ENCODE measurements at regions of chr19 and their contacts with region 1.

Region 1: DNA sequence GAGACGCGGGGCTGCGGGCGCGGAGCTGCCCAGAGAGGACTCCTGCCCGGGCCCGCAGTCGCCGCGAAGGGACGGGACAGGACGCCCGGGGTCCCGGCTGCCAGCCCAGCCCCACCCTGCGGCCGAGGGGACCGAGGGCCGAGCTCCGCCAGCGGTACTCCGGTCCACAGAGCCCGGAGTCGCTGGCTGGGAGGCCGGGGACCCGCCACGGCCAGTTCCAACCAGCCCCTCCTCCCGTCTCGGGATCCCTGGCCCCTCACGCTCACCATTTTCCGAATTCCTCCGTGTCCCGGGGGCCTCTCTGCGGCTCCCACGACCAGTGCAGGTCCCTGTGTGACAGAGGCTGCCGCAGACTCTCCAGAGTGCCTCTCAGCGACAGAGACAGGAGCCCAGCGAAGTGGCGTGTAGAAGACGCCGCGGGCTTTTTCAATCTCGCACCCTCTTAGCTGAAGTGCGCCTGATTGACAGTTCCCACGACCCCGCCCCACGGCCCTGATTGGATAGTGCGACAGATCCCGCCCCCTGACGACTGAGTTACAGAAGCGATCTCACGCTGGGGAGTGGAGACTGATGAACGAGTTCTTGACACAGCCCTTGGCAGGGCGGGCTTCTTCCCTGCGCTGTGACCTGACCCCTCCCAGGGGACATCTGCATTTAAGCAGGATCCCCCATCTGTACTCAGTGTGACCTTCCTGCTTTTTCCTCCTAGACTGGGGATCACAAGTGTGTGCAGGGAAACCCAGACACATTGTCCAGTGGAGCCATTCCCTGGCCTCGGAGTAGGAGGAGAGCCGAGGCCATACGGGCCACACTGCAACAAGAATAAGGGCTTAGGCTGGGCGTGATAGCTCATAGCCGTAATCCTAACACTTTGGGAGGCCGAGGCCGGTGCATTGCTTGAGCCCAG is 44.0 kb downstream of the ZNF823 start:
- DNase-seq: peak; percentile 90 to 96 (median 95)
- ATAC-seq: peak; percentile 99 to 100 (median 99)
- H3K4me3 ChIP-seq: peak overlapping the region; percentile 47 to 85 (median 75)
- H3K27ac ChIP-seq: peak overlapping the region in 2 of 4 donors; percentile 35 to 67
- H3K4me1 ChIP-seq: peaks cover 0 to 6% (median 0%) of the 10 kb centered on the region in 3 donors
- H3K27me3 ChIP-seq: no peaks in the 10 kb centered on the region
- CTCF ChIP-seq: no peak

Region 2: DNA sequence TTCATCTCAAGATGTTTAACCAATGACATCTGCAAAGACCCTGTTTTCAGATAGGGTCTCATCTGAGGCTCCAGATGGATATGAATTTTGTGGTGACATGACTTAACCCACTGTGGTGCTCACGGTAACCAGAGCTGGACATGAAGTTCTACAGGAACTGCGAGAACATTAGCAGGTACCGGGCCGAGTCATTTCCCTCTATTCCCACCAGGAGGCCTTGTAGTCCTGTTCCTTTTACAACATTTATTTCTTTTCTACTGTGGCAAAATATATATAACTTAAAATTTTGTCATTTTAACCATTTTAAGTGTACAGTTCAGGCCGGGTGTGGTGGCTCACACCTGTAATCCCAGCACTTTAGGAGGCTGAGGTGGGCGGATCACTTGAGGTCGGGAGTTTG is 406.4 kb before region 1 on chr19:
- intact Hi-C with region 1: no loop called
- DNase-seq: no peak
- ATAC-seq: peak in 1 of 4 donors; percentile 39
- H3K4me3 ChIP-seq: no peak overlapping the region
- H3K27ac ChIP-seq: no peak overlapping the region
- H3K4me1 ChIP-seq: no peaks in the 10 kb centered on the region
- H3K27me3 ChIP-seq: no peaks in the 10 kb centered on the region
- CTCF ChIP-seq: peak in 3 of 4 donors; percentile 11 to 26 (median 18)

Region 3: GRCh38 chr19:11769995-11770394 is 75.2 kb after region 1 on chr19:
- intact Hi-C with region 1: loop called in 1 of 3 experiments (anchors 10 kb)
- DNase-seq: no peak
- ATAC-seq: no peak
- H3K4me3 ChIP-seq: no peak overlapping the region
- H3K27ac ChIP-seq: no peak overlapping the region
- H3K4me1 ChIP-seq: peaks cover 0 to 7% (median 0%) of the 10 kb centered on the region in 3 donors
- H3K27me3 ChIP-seq: no peaks in the 10 kb centered on the region
- CTCF ChIP-seq: no peak